Activated CD4-positive, alpha-beta memory T cell treated with anti-CD3 and anti-CD28 coated beads, Interleukin-2, amount 10 ng/mL, durations not matched to agents 7 days and 5 days (primary cell): ENCODE measurements at regions of chr16 and their contacts with region 1.

Region 1: DNA sequence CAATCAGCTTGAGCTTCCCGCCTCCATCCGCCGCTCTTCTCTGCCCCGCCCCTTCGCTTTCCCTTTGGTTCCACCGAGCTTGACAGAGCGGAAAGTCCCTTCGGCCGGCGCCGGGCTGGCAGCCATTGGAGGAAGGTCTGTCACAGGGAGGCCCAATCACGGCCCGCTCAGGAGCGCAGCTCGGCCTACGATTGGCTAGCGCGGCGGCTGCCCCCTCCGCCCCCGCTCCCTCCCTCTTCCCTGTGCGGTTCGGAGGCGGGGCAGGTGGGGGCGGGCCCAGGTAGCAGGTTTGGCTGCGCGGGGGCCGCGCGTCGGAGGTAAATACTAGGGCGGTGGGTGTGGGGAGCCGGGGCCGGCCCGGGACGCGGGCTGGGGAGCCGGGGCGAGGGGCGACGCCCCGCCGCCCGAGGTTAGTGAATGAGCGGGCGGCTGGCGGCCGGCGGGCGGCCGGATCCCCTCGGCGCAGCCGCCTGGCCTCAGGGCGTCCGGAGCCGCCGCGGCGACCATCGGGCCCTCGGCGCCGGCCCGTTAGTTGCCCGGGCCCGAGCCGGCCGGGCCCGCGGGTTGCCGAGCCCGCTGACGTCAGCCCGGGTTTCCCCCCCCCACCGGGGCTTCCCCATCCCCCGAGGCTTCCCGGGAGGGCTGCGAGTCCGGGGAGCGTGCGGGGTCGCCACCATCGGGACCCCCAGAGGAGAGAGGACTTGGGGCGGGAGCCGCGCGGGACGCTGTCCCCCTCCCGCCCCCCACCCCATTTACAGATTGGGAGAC is at the start of gene CYLD:
- DNase-seq: peak; percentile 100
- H3K4me3 Mint-ChIP-seq: peak within 1 kb of the TSS; percentile 94
- H3K27ac Mint-ChIP-seq: peak within 1 kb of the TSS; percentile 94
- H3K4me1 Mint-ChIP-seq: peaks cover 39% of the 10 kb centered on the region
- H3K27me3 Mint-ChIP-seq: no peaks in the 10 kb centered on the region
- total RNA-seq, gene CYLD: 235 to 254 TPM

Region 2: GRCh38 chr16:50671644-50672260 is 70.2 kb before region 1 on chr16:
- CTCF ChIA-PET with region 1: interaction called, 240 read pairs
- POLR2A ChIA-PET with region 1: interaction called, 180 read pairs
- DNase-seq: peak; percentile 70
- H3K4me3 Mint-ChIP-seq: no peak overlapping the region
- H3K27ac Mint-ChIP-seq: peak overlapping the region; percentile 23
- H3K4me1 Mint-ChIP-seq: peaks cover 47% of the 10 kb centered on the region
- H3K27me3 Mint-ChIP-seq: no peaks in the 10 kb centered on the region

Region 3: GRCh38 chr16:50696575-50697420 is 45.2 kb before region 1 on chr16:
- CTCF ChIA-PET with region 1: interaction called, 7 read pairs
- POLR2A ChIA-PET with region 1: interaction called, 93 read pairs
- DNase-seq: peak; percentile 84
- H3K4me3 Mint-ChIP-seq: peak overlapping the region; percentile 87
- H3K27ac Mint-ChIP-seq: peak overlapping the region; percentile 81
- H3K4me1 Mint-ChIP-seq: peaks cover 84% of the 10 kb centered on the region
- H3K27me3 Mint-ChIP-seq: peaks cover 3% of the 10 kb centered on the region

Region 4: GRCh38 chr16:50731130-50731988 is 10.6 kb before region 1 on chr16:
- CTCF ChIA-PET with region 1: interaction called, 5 read pairs
- POLR2A ChIA-PET with region 1: interaction called, 10 read pairs
- DNase-seq: no peak
- H3K4me3 Mint-ChIP-seq: no peak overlapping the region
- H3K27ac Mint-ChIP-seq: peak overlapping the region; percentile 41
- H3K4me1 Mint-ChIP-seq: peaks cover 19% of the 10 kb centered on the region
- H3K27me3 Mint-ChIP-seq: no peaks in the 10 kb centered on the region